Mucosa of descending colon (tissue), 3 donors: ENCODE measurements at regions of chr16 and their contacts with region 1.

Region 1: GRCh38 chr16:85821441-85822135 is 22.1 kb downstream of the COX4I1 start:
- DNase-seq: peak; percentile 84 to 88 (median 84)
- ATAC-seq: peak; percentile 96
- H3K4me3 ChIP-seq: no peak overlapping the region
- H3K4me1 ChIP-seq: peaks cover 3% of the 10 kb centered on the region
- CTCF ChIP-seq: peak; percentile 96

Region 2: DNA sequence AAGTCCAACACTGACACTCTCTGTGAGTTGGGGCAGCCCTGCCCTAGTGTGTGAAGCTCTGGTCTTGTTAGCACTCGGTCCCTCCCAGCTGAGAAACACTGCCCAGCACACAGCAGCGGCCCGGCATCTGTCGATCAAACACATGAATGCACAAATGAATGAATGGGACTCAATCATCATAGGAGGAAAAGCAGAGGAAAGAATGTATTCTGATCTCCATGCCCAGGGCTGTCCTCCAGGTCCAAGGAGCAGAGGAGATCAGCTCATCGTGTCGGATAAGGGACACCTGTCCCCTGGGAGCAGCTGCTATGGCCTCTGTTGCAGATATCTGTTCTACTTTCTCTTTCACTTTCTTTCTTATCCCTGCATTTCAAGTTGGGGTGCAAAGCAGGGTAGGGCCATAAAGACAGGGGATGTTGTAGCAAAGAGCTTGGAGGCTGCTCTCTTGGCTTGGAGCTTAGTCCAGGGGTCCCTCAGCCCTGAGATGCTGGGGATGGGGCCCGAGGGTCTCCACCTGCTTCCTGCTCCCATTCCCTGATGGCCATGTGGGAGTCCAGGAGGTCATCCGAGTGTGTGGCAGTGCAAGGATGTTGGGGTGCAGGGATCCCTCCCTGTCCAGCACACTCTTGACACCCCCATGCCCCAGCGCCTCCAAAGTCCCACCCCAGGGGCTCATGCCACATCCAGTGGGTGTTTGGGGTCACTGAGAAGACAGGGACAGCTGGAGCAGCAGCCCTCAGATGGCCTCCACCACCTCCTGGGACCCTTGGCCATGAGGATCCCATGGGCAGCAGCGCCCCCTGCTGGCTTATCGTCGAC is 165.6 kb after region 1 on chr16:
- intact Hi-C with region 1: loop called (anchors 5 kb)
- DNase-seq: peak in 2 of 3 donors; percentile 62 to 68
- ATAC-seq: peak; percentile 76
- H3K4me3 ChIP-seq: no peak overlapping the region
- H3K4me1 ChIP-seq: peaks cover 29% of the 10 kb centered on the region
- CTCF ChIP-seq: no peak

Region 3: DNA sequence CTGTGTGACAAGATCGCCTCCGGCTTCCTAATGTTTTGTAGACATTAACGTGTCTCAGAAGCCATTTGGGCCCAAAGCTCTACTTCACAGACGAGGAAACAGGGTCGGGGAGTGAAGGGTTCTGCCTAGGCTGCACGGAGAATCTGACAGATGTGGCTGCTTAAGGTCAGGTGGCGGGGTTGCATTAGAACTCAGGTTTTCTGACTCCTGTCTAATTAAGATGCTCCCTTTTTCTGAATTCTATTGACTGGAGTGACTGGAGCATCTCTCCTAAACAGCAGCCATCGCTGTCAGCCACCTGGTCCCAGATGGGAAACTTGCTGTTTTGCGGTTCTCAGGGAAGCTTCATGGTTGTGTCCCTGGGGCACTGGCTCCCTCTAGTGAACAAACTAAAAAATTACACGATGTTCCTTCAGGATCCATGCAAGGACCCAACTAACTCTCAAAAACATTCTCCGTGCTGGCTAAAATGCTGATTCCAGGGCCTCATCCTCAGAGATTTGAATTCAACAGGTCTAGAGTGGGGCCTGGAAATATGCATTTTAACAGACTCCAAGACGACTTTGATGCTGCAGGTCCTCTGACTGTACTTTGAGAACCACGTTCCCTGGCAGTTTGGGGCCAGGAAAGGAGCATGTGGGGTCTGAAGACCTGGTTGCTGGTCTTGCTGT is 194.7 kb after region 1 on chr16:
- intact Hi-C with region 1: loop called (anchors 5 kb)
- DNase-seq: peak in 2 of 3 donors; percentile 39 to 50
- ATAC-seq: peak; percentile 79
- H3K4me3 ChIP-seq: no peak overlapping the region
- H3K4me1 ChIP-seq: no peaks in the 10 kb centered on the region
- CTCF ChIP-seq: peak; percentile 57

Region 4: DNA sequence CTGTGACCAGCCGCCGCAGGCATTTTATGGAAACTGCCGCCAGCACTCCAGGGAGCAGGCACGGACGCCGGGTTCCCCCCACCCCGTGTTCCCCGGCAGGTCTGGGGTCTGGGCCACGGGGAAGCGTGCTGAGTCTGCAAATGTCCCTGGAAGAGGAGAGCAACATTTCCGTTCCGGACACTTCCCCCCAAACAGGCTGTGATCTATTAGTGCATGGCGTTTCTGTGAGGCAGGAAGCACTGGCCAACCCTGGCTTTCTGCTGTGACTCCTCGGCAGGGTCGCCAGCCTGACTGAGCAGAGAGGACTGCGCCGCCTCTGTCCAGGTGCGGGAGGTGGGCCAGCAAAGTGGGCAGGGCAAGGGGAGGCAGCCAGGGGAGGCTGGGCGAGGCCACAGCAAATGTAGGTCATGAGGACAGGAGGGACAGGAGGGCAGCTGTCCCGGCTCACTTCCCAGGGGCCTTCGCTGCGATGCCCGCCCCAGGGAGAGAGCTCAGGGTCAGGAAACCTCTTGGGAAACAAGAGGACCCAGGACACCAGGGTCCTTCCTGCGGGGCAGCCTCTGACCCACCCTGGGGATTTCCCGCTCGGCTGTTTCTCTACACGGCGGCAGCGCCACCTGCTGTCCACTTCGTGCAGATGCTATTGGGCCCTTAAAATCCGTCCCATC is 698.2 kb after region 1 on chr16:
- intact Hi-C with region 1: loop called in 1 of 2 experiments (anchors 10 kb)
- DNase-seq: peak; percentile 57 to 69 (median 67)
- ATAC-seq: peak; percentile 57
- H3K4me3 ChIP-seq: no peak overlapping the region
- H3K4me1 ChIP-seq: peaks cover 4% of the 10 kb centered on the region
- CTCF ChIP-seq: peak; percentile 78